Activated CD8-positive, alpha-beta T cell treated with anti-CD3 and anti-CD28 coated beads for 36 hours (primary cell): ENCODE measurements at regions of chr1 and their contacts with region 1.

Region 1: DNA sequence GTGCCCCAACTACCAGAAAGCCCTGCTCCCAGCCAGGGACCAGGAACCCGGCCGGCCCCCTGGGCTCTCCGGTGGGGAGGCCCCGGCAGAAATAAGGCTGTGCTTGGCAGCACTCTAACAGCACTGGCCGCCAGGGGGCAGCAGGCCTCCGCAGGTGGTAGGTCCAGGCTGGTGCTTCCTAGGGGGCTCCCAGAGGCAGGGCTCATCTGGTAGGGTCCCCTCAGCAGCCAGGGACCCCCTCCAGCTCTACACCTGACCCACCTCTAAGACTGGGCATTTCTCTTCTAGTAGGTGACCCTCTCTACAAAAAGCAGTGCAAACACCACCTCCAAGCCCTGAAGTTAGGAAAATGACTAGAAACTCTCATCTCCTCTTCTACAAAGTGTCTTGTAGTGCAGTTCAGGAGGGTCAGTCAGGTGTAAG is 85.6 kb downstream of the STUM start:
- DNase-seq: peak; percentile 93
- ATAC-seq: peak; percentile 77
- H3K4me3 Mint-ChIP-seq: no peak overlapping the region
- H3K27ac Mint-ChIP-seq: peak overlapping the region; percentile 92
- H3K4me1 Mint-ChIP-seq: peaks cover 56% of the 10 kb centered on the region
- H3K27me3 Mint-ChIP-seq: no peaks in the 10 kb centered on the region
- CTCF ChIP-seq: peak; percentile 98

Region 2: GRCh38 chr1:226649780-226650179 is 15.6 kb after region 1 on chr1:
- CTCF ChIA-PET with region 1: interaction called, 55 read pairs
- POLR2A ChIA-PET with region 1: interaction called, 28 read pairs
- intact Hi-C with region 1: no loop called
- DNase-seq: peak; percentile 68
- ATAC-seq: no peak
- H3K4me3 Mint-ChIP-seq: no peak overlapping the region
- H3K27ac Mint-ChIP-seq: peak overlapping the region; percentile 56
- H3K4me1 Mint-ChIP-seq: peaks cover 45% of the 10 kb centered on the region
- H3K27me3 Mint-ChIP-seq: no peaks in the 10 kb centered on the region
- CTCF ChIP-seq: peak; percentile 24

Region 3: GRCh38 chr1:226662642-226663326 is 28.6 kb after region 1 on chr1:
- CTCF ChIA-PET with region 1: interaction called, 22 read pairs
- POLR2A ChIA-PET with region 1: interaction called, 14 read pairs
- intact Hi-C with region 1: no loop called
- DNase-seq: peak; percentile 96
- ATAC-seq: peak; percentile 91
- H3K4me3 Mint-ChIP-seq: peak overlapping the region; percentile 49
- H3K27ac Mint-ChIP-seq: peak overlapping the region; percentile 96
- H3K4me1 Mint-ChIP-seq: peaks cover 98% of the 10 kb centered on the region
- H3K27me3 Mint-ChIP-seq: no peaks in the 10 kb centered on the region
- CTCF ChIP-seq: no peak

Region 4: GRCh38 chr1:226679853-226680516 is 45.8 kb after region 1 on chr1:
- CTCF ChIA-PET with region 1: interaction called, 133 read pairs
- POLR2A ChIA-PET with region 1: interaction called, 10 read pairs
- intact Hi-C with region 1: no loop called
- DNase-seq: peak; percentile 89
- ATAC-seq: peak; percentile 18
- H3K4me3 Mint-ChIP-seq: peak overlapping the region; percentile 68
- H3K27ac Mint-ChIP-seq: peak overlapping the region; percentile 94
- H3K4me1 Mint-ChIP-seq: peaks cover 98% of the 10 kb centered on the region
- H3K27me3 Mint-ChIP-seq: no peaks in the 10 kb centered on the region
- CTCF ChIP-seq: no peak

Region 5: DNA sequence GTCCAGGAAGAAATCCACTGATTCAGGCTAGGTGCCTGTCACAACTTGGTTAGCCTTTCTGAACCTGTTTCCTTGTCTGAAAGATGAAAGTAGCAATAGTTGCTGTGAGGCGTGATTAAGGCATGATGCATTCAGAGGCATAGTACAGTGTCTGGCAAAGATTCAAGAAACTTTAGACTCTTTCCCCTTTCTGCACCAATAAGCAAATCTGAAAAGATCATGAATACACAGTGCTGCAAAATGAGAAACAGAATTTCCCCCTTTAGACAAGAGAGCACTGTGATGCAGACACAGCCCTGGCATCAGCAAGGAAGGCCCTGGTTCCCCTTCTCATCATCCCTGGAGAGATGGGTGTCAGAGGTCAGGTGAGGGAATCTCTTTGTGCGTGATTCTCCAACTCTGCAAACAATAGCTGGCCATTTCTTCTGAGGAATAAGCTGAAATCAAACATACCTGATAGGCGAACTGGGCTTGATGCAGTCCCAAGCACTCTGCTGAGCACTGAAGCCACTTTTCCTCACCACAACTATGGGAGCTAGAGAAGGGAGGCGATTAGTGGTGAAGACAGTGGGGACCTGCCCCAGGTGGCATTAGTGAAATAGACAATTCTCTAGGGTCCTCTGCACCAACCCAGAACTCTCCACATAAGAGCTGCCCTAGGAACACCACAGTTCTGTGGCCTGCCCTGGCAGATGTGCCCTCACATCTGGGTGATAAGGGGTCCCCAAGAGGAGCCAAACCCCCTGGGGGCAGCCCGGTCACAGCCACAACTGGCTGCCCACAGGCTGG is 63.2 kb after region 1 on chr1:
- CTCF ChIA-PET with region 1: interaction called, 10 read pairs
- POLR2A ChIA-PET with region 1: interaction called, 7 read pairs
- intact Hi-C with region 1: no loop called
- DNase-seq: peak; percentile 48
- ATAC-seq: peak; percentile 75
- H3K4me3 Mint-ChIP-seq: peak overlapping the region; percentile 11
- H3K27ac Mint-ChIP-seq: peak overlapping the region; percentile 93
- H3K4me1 Mint-ChIP-seq: peaks cover 90% of the 10 kb centered on the region
- H3K27me3 Mint-ChIP-seq: no peaks in the 10 kb centered on the region
- CTCF ChIP-seq: no peak

Region 6: DNA sequence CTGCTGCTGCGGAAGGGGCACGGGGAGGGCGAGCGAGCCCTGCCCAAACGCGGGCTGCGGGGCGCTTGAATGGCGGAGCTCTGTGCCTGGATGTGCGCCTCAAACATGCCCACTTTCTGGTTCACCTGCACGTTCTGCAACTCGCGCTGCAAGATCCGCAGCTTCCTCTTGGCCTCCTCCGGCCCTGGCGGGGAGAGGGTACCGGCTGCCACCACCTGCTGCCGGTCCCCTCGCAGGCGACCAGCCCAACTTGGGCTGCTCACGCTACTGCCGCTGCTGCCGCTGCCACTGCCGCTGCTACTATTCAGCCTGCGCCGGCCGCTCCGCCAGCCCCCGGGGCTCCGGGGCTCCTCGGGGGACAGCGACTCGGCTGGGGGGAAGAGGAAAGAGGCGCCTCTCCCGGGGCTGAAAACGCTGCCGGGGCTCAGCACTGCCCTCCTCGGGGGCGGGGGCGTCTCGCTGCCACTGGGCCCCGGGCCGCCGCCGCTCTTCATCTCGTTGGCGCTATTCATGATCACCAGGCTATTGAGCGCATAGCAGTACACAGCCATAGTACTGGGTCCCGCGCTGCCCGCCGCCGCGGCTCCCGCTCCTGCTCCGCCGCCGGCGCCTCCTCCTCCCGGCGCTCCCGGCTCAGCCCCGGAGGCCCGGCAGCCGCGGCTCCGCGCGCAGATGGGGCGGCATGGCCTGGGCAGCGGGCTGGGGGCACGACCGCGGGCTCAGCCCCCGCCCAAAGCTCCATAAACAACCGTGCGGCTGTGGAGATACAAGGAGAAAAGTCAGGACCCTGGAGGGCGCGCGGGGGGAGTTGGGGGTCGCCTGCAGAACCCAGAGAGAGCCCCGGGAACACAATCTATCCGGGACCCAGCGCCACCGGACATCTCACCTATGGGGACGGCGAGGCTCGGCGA is 103.0 kb after region 1 on chr1:
- CTCF ChIA-PET with region 1: interaction called, 10 read pairs
- POLR2A ChIA-PET with region 1: interaction called, 4 read pairs
- intact Hi-C with region 1: no loop called
- DNase-seq: peak; percentile 73
- ATAC-seq: peak; percentile 46
- H3K4me3 Mint-ChIP-seq: peak overlapping the region; percentile 92
- H3K27ac Mint-ChIP-seq: peak overlapping the region; percentile 88
- H3K4me1 Mint-ChIP-seq: peaks cover 39% of the 10 kb centered on the region
- H3K27me3 Mint-ChIP-seq: no peaks in the 10 kb centered on the region
- CTCF ChIP-seq: peak; percentile 23